ENCODE measurements at regions of chr18 and their contacts with region 1.

Region 1: DNA sequence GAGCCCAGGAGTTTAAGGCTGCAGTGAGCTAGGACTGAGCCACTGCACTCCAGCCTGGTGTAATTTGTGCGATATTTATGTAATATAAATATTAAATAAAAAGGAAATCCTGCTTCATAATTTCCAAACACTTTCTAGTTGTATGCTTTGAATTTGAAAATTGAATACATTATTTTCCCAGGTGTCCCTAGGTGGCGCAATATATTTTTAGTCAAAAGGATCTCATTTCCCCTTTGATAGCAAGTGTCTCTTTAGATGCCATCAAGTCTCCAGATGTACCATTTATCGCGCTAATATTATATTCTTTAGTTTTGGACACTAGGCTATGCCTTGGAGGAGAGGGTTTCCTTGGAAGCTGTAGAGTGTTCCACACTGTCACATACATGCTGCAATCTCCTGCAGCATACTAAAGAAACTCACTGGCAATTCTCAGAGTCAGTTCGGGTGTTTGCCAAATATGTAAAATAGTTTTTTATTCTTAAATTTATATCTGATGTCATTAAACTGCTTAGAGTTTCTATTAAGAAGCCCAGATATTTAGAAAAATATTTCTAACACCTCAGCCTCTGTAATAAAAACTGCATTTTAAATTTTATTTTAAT is 5.6 kb upstream of the WDR7 start:
- DNase-seq: no peak
- H3K4me3 ChIP-seq: peak overlapping the region in 3 of 59 donors; percentile 12 to 32 (median 22)
- H3K27ac ChIP-seq: no peak overlapping the region
- H3K27me3 ChIP-seq: no peaks in the 10 kb centered on the region
- CTCF ChIP-seq: peak in 53 of 56 donors; percentile 14 to 60 (median 41)

Region 2: GRCh38 chr18:56575819-56576663 is 69.5 kb before region 1 on chr18:
- intact Hi-C with region 1: no loop called
- DNase-seq: peak in 1 of 10 donors; percentile 11
- H3K4me3 ChIP-seq: peak overlapping the region in 11 of 59 donors; percentile 1 to 41 (median 14)
- H3K27ac ChIP-seq: peak overlapping the region in 18 of 59 donors; percentile 3 to 57 (median 21)
- H3K27me3 ChIP-seq: no peaks in the 10 kb centered on the region
- CTCF ChIP-seq: peak; percentile 69 to 94 (median 83)

Region 3: DNA sequence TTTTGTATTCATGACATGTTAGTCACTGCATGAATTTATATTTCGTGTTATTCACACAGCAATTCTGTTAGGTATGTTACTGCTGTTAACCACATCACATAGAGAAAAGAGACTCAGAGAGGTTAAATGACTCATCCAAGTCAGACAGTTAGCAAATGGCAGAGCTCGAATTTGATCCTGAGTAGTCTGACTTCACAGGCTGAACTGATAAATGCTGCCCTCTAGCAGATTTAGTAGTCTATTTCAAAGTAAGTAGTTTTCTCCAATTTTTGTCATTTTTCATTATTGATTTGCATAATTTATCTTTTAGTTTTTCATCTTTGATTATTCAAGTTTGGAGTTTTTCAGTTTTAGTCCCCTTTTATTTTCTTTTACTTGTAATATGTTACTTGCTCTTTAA is 63.9 kb after region 1 on chr18:
- intact Hi-C with region 1: loop called in 1 of 2 experiments (anchors 10 kb)
- DNase-seq: no peak
- H3K4me3 ChIP-seq: no peak overlapping the region
- H3K27ac ChIP-seq: no peak overlapping the region
- H3K27me3 ChIP-seq: no peaks in the 10 kb centered on the region
- CTCF ChIP-seq: peak in 29 of 56 donors; percentile 5 to 44 (median 28)